ENCODE measurements at regions of chr13 and their contacts with region 1.

Region 1: GRCh38 chr13:67598822-67599221 is 368.7 kb upstream of the PCDH9 start:
- DNase-seq: no peak
- ATAC-seq: no peak
- H3K4me3 ChIP-seq: no peak overlapping the region
- H3K27ac ChIP-seq: no peak overlapping the region
- H3K4me1 ChIP-seq: no peaks in the 10 kb centered on the region
- H3K27me3 ChIP-seq: no peaks in the 10 kb centered on the region
- CTCF ChIP-seq: no peak
- POLR2A ChIP-seq: no peak
- RAD21 ChIP-seq: no peak

Region 2: GRCh38 chr13:67330149-67330548 is 268.7 kb before region 1 on chr13:
- CTCF ChIA-PET with region 1: no interaction called
- POLR2A ChIA-PET with region 1: no interaction called
- RAD21 ChIA-PET with region 1: no interaction called
- intact Hi-C with region 1: no loop called
- DNase-seq: no peak
- ATAC-seq: no peak
- H3K4me3 ChIP-seq: no peak overlapping the region
- H3K27ac ChIP-seq: no peak overlapping the region
- H3K4me1 ChIP-seq: no peaks in the 10 kb centered on the region
- H3K27me3 ChIP-seq: no peaks in the 10 kb centered on the region
- CTCF ChIP-seq: no peak
- POLR2A ChIP-seq: no peak
- RAD21 ChIP-seq: no peak

Region 3: GRCh38 chr13:67664502-67664901 is 65.7 kb after region 1 on chr13:
- CTCF ChIA-PET with region 1: no interaction called
- POLR2A ChIA-PET with region 1: no interaction called
- RAD21 ChIA-PET with region 1: no interaction called
- intact Hi-C with region 1: loop called (anchors 10 kb)
- DNase-seq: no peak
- ATAC-seq: no peak
- H3K4me3 ChIP-seq: no peak overlapping the region
- H3K27ac ChIP-seq: no peak overlapping the region
- H3K4me1 ChIP-seq: no peaks in the 10 kb centered on the region
- H3K27me3 ChIP-seq: no peaks in the 10 kb centered on the region
- CTCF ChIP-seq: no peak
- POLR2A ChIP-seq: no peak
- RAD21 ChIP-seq: no peak

Measured in HCT116 (cell line).